Dendritic cell treated with granulocyte-macrophage colony-stimulating factor and Interleukin-4, amounts not matched to agents 40 ng/mL and 50 ng/mL, for 4 days (primary cell): ENCODE measurements at regions of chr16 and their contacts with region 1.

Region 1: DNA sequence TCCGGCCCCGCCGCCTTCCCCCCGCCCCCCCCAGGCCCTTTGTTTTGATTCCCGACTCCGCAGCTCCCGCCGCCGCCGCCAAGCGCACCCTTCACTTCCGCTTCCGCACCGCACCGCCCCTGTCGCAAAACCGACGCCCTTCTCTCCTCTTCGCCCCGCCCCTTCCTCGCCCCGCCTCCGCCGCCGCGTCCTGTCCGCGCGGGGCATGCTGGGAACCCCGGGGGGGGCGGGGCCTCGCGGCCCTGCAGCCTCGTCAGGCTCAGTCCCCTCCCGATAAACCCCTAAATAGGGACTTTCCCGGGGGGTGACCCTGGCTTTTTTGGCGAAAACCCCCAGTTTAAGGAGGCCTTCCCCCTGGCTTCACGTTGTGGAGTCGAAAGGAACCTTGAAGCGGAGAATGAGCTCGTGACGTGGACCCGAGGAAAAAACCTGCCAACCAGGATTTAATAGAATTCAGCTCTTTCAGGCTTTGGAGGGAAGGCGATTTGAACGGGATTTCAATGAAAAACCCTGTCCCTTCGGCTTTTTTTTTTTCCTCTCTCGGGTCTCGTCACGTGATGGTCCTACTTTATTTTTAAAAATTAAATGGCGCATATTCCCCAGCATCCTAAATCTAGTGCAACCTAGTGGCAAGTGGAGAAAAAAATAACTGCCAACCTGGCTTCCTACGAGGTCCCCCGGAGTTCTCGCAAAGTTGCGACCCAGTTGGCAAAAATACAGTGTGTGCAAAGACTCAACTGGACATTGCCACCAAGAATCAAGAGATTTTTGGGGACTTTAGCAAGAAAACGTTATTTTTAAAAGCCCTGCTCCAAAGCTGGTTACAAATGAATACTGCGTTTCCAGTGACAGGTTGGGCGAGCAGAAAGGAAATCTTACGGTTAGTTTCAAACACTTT is at the start of gene MARF1:
- H3K4me3 Mint-ChIP-seq: peak within 1 kb of the TSS; percentile 79
- H3K27ac Mint-ChIP-seq: peak within 1 kb of the TSS; percentile 98
- H3K4me1 Mint-ChIP-seq: peaks cover 39% of the 10 kb centered on the region
- H3K27me3 Mint-ChIP-seq: no peaks in the 10 kb centered on the region

Region 2: DNA sequence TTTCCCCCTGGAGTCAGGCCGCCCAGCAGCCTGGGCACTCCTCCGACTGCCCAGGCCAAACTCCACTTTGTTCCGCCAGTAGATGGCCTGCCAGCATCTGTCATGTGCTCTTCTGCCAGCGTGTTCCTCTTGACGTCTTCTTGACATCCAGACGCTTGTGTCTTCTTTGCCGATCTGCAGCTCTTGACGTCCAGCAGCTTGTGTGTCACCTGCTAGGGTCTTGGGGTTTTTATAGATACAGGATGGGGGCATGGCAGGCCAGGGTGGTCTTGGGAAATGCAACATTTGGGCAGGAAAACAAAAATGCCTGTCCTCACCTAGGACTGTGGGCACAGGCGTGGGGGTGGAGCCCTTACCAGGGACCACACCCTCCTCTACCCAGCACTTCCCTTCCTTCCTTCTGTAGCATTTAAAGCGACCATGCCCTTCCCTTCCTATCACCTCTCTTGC is 120.2 kb before region 1 on chr16:
- intact Hi-C with region 1: loop called (anchors 5 kb)
- H3K4me3 Mint-ChIP-seq: peak overlapping the region; percentile 78
- H3K27ac Mint-ChIP-seq: peak overlapping the region; percentile 88
- H3K4me1 Mint-ChIP-seq: peaks cover 61% of the 10 kb centered on the region
- H3K27me3 Mint-ChIP-seq: no peaks in the 10 kb centered on the region

Region 3: DNA sequence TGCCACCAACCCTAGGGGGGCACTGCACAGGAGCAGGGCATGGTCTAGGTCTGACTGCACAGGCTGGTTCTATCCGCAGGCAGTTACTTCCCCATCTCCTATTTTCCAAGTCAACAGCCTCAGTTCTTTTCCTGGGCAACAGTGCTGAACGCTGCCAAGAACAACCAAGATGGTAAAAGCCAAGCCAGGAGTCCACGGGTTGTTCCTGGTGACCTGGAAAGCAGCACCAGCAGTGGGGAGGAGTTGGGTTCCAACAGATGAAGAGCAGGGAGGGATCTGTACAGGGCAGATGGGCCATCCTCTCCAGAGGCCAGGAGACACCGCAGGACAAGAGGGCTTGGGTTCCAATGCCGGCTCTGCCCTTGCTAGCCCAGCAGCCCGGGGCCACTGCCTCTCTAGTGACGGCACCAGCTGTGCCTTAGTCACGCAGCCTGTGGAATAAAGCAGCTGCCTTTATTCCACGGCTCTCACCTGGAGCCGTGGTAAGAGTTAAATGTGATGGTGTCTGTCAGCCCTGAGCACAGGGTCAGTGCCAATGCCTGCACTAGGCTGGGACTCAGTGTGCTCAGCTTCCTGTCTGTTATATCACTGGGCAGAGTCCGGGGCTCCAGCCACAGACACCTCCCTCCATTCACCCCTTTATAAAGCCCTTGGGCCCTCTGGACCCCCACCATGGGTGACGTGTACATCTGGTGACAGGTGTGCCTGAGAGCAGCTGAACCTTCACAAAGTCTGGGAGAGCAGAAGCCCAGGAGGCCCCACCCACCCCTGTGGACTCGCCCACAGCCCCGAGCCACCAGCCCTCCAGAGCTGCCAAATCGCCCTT is 45.3 kb before region 1 on chr16:
- intact Hi-C with region 1: loop called (anchors 5 kb)
- H3K4me3 Mint-ChIP-seq: no peak overlapping the region
- H3K27ac Mint-ChIP-seq: peak overlapping the region; percentile 65
- H3K4me1 Mint-ChIP-seq: peaks cover 50% of the 10 kb centered on the region
- H3K27me3 Mint-ChIP-seq: no peaks in the 10 kb centered on the region

Region 4: DNA sequence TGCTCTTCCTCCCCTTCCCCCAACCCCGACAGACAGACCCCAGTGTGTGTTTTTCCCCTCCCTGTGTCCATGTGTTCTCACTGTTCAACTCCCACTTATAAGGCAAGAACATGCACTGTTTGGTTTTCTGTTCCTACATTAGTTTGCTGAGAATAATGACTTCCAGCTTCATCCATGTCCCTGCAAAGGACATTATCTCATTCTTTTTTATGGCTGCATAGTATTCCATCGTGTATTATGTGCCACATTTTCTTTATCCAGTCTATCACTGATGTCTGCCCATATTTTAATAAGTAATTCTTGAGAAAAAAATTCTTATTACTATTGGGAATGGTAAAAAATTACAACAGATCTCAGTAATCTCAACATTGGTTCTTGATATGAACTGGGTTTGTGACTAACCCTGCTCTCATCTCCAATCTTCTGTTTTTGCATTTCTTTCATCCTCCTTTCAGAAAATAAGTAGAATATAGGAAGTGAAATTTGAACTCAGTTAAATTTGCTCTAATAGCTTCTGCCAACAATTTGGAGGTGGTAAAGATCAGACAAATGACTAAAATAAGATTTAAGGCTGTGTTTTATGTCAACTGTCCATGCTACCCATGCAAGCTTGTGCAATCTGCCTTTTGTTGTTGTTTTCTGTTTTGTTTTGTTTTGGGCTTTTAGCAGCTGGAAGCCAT is 11.4 kb before region 1 on chr16:
- intact Hi-C with region 1: no loop called
- H3K4me3 Mint-ChIP-seq: no peak overlapping the region
- H3K27ac Mint-ChIP-seq: no peak overlapping the region
- H3K4me1 Mint-ChIP-seq: peaks cover 17% of the 10 kb centered on the region
- H3K27me3 Mint-ChIP-seq: no peaks in the 10 kb centered on the region

Region 5: GRCh38 chr16:15672514-15673167 is 29.3 kb after region 1 on chr16:
- intact Hi-C with region 1: loop called (anchors 2 kb)
- H3K4me3 Mint-ChIP-seq: peak overlapping the region; percentile 72
- H3K27ac Mint-ChIP-seq: peak overlapping the region; percentile 96
- H3K4me1 Mint-ChIP-seq: peaks cover 59% of the 10 kb centered on the region
- H3K27me3 Mint-ChIP-seq: no peaks in the 10 kb centered on the region

Region 6: DNA sequence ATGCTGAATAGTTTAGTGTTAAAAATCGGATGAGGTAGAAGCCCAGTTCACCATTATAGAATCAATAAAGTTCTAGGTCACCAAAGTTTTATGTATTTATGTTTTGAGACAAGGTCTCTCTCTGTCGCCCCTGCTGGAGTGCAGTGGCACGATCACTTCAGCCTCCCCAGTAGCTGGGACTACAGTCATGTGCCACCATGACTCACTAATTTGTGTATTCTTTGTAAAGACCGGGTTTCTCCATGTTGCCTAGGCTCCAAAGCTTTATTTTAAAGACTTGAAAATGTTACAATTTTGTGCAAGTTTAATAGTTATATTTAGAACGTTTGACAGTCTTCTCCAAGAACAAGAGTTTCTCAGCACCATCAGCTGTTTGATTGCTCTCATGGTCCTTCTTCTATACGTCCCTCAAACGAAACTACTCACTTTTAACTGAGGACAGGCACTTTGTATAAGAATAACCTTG is 38.8 kb after region 1 on chr16:
- intact Hi-C with region 1: loop called (anchors 2 kb)
- H3K4me3 Mint-ChIP-seq: no peak overlapping the region
- H3K27ac Mint-ChIP-seq: peak overlapping the region; percentile 39
- H3K4me1 Mint-ChIP-seq: peaks cover 11% of the 10 kb centered on the region
- H3K27me3 Mint-ChIP-seq: no peaks in the 10 kb centered on the region

Region 7: DNA sequence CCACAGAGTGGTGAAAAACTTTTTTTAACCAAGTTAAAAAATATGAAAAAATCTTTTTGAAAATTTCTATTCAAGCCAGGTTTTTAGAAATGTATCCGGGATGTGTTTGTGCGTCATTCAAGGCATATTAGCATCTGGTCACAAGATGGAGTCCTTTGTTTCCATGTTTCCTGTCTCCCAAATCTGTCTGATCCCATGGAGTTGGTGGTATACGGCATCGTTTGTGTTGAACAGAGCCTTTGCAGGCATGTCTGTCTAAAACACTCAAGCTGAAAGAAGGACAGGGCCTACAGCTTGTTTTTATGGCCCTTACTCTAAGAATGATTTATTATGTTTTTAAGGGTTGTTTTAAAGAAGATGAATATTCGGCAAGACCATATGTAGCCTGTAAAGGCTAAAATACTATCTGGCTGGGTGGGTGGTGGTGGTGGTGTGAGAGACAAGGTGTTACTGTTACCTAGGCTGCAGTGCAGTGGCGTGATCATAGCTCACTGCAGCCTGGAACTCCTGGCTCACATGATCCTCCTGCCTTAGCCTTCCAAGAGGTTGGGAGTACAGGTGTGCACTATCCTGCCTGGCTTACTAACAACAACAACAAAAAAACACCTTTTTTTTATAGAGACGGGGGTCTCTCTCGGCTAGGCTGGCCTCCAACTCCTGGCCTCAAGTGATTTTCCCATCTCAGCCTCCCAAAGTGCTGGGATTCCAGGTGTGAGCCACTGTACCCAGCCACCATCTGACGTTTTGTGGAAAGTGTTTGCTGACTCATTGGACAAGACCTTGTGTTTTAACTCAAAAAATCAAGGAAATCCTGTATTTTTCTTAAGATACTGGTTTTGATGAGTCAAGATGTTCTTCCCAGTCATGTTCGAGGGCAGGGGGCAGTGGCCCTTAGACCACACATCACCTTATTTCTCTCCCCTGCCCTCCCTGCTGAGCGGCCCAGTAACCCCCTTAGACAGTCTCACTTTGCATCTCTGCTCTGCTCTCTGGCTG is 59.0 kb after region 1 on chr16:
- intact Hi-C with region 1: no loop called
- H3K4me3 Mint-ChIP-seq: no peak overlapping the region
- H3K27ac Mint-ChIP-seq: peak overlapping the region; percentile 51
- H3K4me1 Mint-ChIP-seq: peaks cover 17% of the 10 kb centered on the region
- H3K27me3 Mint-ChIP-seq: no peaks in the 10 kb centered on the region